Posterior cingulate gyrus (tissue), 11 donors: ENCODE measurements at regions of chr14 and their contacts with region 1.

Region 1: DNA sequence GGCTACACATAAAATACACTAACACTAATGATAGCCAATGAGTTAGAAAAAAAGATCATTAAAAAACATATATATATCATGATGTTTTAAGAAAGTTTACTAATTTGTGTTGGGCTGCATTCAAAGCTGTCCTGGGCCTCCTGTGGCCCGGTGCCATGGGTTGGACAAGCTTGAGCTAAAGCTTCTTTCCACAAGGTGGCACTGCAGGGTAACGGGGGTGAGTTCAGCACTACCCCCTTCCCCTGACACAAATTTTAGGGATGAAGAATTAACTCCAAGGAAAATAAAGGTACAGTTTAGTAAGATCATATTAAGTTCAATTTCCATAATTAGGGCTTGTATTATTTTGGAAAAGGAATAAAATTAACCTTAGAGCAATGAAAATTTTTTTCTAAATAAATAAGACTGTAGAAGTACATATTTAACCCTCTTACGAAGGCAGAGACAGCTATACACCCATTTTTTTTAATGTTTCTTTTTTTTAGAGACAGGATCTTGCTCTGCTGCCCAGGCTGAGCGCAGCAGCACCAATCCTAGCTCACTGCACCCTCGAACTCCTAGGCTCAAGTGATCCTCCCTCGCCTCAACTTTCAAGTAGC is 38.9 kb downstream of the PPP1R13B start:
- DNase-seq: peak in 7 of 10 donors; percentile 36 to 92 (median 62)

Region 2: DNA sequence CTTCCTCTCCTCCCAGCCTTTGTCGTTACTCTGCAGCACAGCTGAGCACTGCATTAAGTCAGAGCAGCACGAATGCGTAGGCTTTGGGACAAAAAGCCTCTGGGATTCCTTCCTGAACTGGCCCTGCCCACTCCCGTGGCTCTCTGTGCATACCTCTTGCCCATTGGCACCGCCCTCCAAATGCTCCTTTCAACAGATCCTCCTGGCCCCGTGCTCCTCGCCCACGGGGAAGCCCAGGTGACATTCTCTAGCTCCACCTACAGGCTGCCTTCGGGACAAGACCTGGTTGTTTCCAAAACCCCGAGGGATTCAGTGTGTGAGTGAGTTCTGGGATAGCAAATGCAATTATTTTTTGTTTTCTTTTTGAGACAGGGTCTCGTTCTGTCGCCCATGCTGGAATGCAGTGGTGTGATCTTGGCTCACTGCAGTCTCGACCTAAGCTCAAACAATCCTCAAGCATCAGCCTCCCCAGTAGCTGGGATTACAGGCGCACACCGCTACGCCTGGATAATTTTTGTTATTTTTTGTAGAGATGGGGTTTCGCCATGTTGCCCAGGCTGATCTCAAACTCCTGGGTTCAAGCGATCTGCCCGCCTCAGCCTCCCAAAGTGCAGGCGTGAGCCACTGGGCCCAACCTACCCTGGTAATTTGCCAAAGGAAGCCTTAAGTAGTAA is 101.9 kb after region 1 on chr14:
- intact Hi-C with region 1: loop called (anchors 5 kb)
- DNase-seq: peak; percentile 54 to 97 (median 80)

Region 3: GRCh38 chr14:103920981-103921854 is 112.7 kb after region 1 on chr14:
- intact Hi-C with region 1: no loop called
- DNase-seq: peak; percentile 91 to 99 (median 92)

Region 4: DNA sequence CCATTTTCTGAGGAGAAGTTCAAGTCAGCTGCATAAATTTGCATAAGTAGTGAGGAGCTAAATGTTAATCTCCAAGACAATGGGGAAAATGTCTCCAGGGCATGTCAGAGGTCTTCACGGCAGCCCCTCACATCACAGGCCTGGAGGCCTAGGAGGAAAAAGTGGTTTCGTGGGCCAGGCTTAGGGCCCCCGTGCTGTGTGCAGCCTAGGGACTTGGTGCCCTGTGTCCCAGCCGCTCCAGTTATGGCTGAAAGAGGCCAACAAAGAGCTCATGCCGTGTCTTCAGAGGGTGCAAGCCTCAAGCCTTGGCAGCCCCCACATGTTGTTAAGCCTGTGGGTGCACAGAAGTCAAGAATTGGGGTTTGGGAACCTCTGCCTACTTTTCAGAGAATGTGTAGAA is 175.7 kb after region 1 on chr14:
- intact Hi-C with region 1: loop called (anchors 2 kb)
- DNase-seq: no peak